ENCODE measurements at regions of chr11 and their contacts with region 1.

Region 1: DNA sequence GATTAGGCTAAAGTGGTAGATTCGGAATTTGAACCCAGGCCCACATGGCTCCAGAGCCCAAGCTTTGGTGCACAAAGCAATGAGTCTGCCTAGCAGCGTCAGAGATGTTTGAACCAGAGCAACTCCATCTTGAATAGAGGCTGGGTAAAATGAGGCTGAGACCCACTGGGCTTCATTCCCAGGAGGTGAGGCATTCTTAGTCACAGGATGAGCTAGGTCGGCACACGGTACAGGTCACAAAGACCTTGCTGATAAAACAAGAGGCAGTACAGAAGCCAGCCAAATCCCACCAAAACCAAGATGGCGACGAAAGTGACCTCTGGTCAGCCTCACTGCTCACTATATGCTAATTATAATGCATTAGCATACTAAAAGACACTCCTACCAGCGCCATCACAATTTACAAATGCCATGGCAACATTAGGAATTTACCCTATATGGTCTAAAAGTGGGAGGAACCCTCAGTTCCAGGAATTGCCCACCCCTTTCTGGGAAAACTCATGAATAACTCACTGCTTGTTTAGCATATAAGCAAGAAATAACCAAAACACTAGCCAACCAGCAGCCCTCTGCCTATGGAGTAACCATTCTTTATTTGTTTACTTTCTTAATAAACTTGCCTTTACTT is 40.3 kb upstream of the DAGLA start:
- DNase-seq: no peak
- H3K4me3 ChIP-seq: no peak overlapping the region
- H3K27ac ChIP-seq: no peak overlapping the region
- H3K4me1 ChIP-seq: peaks cover 0 to 2% of the 10 kb centered on the region in 2 experiments; a peak in 1 of 4 replicates
- H3K27me3 ChIP-seq: no peaks in the 10 kb centered on the region; the same call in 1 of the 2 replicates
- CTCF ChIP-seq: no peak
- EP300 ChIP-seq: no peak
- RAD21 ChIP-seq: no peak

Region 2: DNA sequence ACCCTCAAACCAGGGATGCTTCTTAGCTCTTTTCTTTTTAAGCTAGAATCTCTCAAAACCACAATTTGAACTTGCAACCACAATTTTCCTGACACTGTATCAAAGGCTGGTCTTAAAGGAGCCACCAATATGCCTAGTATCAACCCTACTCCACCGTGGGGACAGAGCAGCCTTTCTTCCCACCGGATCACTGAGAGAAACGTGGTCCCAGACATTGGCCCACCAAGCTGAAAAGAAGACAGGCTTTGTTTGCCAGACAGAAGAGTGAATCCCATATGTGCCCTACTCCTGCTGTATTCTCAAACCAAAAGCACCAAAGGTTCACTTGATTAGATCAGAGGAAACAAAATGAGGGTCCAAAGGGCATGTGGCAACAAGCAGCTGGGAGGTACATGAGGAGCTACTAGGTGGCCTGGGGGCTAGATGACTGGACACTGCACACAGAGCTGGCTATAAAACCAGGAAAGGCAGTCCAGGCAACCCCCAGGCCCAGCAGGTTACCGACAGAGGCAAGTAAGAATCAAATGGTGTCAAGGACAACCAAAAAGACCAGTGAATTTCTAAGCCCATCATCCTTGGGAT is 341.2 kb before region 1 on chr11:
- CTCF ChIA-PET with region 1: no interaction called
- POLR2A ChIA-PET with region 1: no interaction called
- DNase-seq: no peak
- H3K4me3 ChIP-seq: no peak overlapping the region
- H3K27ac ChIP-seq: peak overlapping the region in 1 of 2 experiments; percentile 75; a peak in 1 of 4 replicates
- H3K4me1 ChIP-seq: peaks cover 11 to 19% of the 10 kb centered on the region in 2 experiments; a peak in 2 of 4 replicates
- H3K27me3 ChIP-seq: no peaks in the 10 kb centered on the region
- CTCF ChIP-seq: no peak
- EP300 ChIP-seq: no peak
- RAD21 ChIP-seq: no peak

Region 3: DNA sequence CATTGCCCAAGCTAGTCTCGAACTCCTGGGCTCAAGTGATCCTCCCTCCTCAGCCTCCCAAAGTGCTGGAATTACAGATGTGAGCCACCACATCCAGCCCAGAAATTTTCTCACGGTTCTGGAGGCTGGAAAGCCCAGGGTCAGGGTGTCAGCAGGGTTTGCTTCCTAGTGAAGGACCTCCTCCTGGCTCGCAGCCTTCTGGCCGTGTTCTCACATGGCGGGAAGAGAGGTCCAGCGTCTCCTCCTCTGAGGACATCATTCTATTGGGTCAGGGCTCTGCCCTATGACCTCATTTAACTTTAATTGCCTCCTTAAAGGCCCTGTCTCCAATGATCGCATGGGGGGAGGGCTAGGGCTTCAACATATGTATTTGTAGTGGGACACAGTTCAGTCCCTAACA is 171.9 kb before region 1 on chr11:
- CTCF ChIA-PET with region 1: interaction called, 12 read pairs
- POLR2A ChIA-PET with region 1: no interaction called
- DNase-seq: no peak
- H3K4me3 ChIP-seq: no peak overlapping the region
- H3K27ac ChIP-seq: no peak overlapping the region
- H3K4me1 ChIP-seq: no peaks in the 10 kb centered on the region
- H3K27me3 ChIP-seq: no peaks in the 10 kb centered on the region
- CTCF ChIP-seq: no peak
- EP300 ChIP-seq: no peak
- RAD21 ChIP-seq: no peak

Region 4: GRCh38 chr11:61654397-61654829 is 14.5 kb after region 1 on chr11:
- CTCF ChIA-PET with region 1: interaction called, 12 read pairs
- POLR2A ChIA-PET with region 1: no interaction called
- DNase-seq: no peak
- H3K4me3 ChIP-seq: no peak overlapping the region
- H3K27ac ChIP-seq: no peak overlapping the region
- H3K4me1 ChIP-seq: no peaks in the 10 kb centered on the region
- H3K27me3 ChIP-seq: no peaks in the 10 kb centered on the region; the same call in 1 of the 2 replicates
- CTCF ChIP-seq: no peak
- EP300 ChIP-seq: no peak
- RAD21 ChIP-seq: no peak

Region 5: GRCh38 chr11:61756452-61757212 is 116.7 kb after region 1 on chr11:
- CTCF ChIA-PET with region 1: no interaction called
- POLR2A ChIA-PET with region 1: no interaction called
- DNase-seq: no peak
- H3K4me3 ChIP-seq: no peak overlapping the region
- H3K27ac ChIP-seq: no peak overlapping the region
- H3K4me1 ChIP-seq: peaks cover 9 to 14% of the 10 kb centered on the region in 2 experiments; a peak in 2 of 4 replicates
- H3K27me3 ChIP-seq: no peaks in the 10 kb centered on the region
- CTCF ChIP-seq: no peak
- EP300 ChIP-seq: no peak
- RAD21 ChIP-seq: no peak

Region 6: DNA sequence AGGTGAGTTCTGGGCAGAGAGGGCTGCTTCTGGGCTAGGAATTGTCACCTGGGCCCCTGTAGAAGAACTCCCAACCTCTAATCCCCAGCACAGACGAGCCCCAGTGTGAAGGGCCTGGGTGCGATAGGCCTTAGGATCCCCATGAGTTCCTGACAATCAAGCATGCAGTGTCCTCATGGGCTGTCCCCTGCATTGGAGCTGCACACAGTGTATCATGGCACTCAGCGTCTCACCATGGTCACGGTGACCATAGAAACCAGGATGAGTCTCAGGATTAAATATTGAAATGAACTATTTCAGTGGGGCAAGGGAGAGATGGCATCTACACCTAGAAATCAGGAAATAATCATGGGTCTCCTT is 568.8 kb after region 1 on chr11:
- CTCF ChIA-PET with region 1: no interaction called
- POLR2A ChIA-PET with region 1: no interaction called
- DNase-seq: no peak
- H3K4me3 ChIP-seq: no peak overlapping the region
- H3K27ac ChIP-seq: no peak overlapping the region
- H3K4me1 ChIP-seq: no peaks in the 10 kb centered on the region
- H3K27me3 ChIP-seq: peaks cover 18% of the 10 kb centered on the region
- CTCF ChIP-seq: no peak
- EP300 ChIP-seq: no peak
- RAD21 ChIP-seq: no peak